ENCODE measurements at regions of chr1 and their contacts with region 1.

Region 1: GRCh38 chr1:201559679-201560162 is 20.8 kb downstream of the NAV1 start:
- DNase-seq: peak; percentile 92 to 96 (median 94)
- ATAC-seq: peak; percentile 95
- H3K4me3 ChIP-seq: no peak overlapping the region
- H3K27ac ChIP-seq: no peak overlapping the region
- H3K4me1 ChIP-seq: peaks cover 16 to 20% of the 10 kb centered on the region in 2 experiments
- H3K27me3 ChIP-seq: no peaks in the 10 kb centered on the region
- CTCF ChIP-seq: peak; percentile 99 to 100 (median 99)
- EP300 ChIP-seq: peak; percentile 53
- POLR2A ChIP-seq: no peak
- RAD21 ChIP-seq: peak; percentile 100

Region 2: DNA sequence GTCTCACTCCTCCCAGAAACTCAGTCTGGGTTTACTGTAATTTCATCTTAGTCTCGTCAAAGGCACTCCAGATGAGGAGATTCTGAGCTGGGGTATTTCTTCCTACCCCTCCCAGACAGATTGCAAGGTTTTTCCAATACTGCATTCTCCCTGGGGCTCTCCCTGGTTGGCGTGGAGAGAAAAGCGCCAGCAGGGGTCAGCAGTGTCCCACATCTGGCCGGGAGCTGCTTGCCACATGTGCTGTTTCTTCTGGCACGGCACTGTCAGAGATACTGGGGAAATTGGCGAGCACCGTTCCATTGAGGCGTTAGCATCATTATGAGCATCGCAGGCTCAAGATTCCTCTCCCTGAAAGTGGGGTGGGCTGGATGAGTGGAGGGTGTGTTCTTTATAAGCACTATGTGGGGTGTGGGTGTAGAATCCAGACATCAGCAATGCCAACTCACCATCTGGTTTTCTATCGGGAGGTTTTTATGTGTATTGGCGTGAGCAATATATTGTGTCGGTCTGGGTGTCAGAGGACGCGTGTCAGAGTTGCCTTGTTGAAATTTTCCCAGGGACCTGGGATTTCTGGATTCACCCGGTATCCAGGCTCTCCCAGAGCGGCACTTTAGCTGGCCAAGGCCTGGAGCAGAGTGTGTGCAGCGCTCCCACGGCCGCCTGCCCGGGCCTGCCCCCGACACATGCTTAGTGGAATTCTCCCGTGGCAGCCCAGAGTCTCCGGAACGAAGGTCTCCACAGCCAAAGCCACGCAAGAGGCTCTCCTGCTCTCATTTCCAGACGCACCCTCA is 28.8 kb before region 1 on chr1:
- CTCF ChIA-PET with region 1: interaction called, 6 read pairs
- POLR2A ChIA-PET with region 1: interaction called, 6 read pairs
- in situ Hi-C with region 1: no loop called
- intact Hi-C with region 1: loop called (anchors 1 kb)
- DNase-seq: peak; percentile 76 to 88 (median 82)
- ATAC-seq: peak; percentile 98
- H3K4me3 ChIP-seq: no peak overlapping the region
- H3K27ac ChIP-seq: no peak overlapping the region
- H3K4me1 ChIP-seq: peaks cover 6 to 14% of the 10 kb centered on the region in 2 experiments
- H3K27me3 ChIP-seq: peaks cover 0 to 13% of the 10 kb centered on the region in 2 experiments; a peak in 3 of 5 replicates
- CTCF ChIP-seq: peak; percentile 95 to 98 (median 98)
- EP300 ChIP-seq: peak; percentile 41
- POLR2A ChIP-seq: no peak
- RAD21 ChIP-seq: peak; percentile 97 to 98

Region 3: GRCh38 chr1:201703621-201704439 is 144.1 kb after region 1 on chr1:
- CTCF ChIA-PET with region 1: interaction called, 138 read pairs
- POLR2A ChIA-PET with region 1: interaction called, 9 read pairs
- in situ Hi-C with region 1: loop called (anchors 5 kb)
- intact Hi-C with region 1: loop called (anchors 1 kb)
- DNase-seq: peak; percentile 90 to 96 (median 94)
- ATAC-seq: peak; percentile 98
- H3K4me3 ChIP-seq: no peak overlapping the region
- H3K27ac ChIP-seq: no peak overlapping the region
- H3K4me1 ChIP-seq: peaks cover 11 to 15% of the 10 kb centered on the region in 2 experiments
- H3K27me3 ChIP-seq: peaks cover 0 to 4% of the 10 kb centered on the region in 2 experiments; a peak in 1 of 5 replicates
- CTCF ChIP-seq: peak; percentile 98 to 99 (median 99)
- EP300 ChIP-seq: peak; percentile 21; the same call in 1 of the 2 replicates
- POLR2A ChIP-seq: no peak
- RAD21 ChIP-seq: peak; percentile 100

Region 4: GRCh38 chr1:201783572-201783971 is 223.9 kb after region 1 on chr1:
- CTCF ChIA-PET with region 1: no interaction called
- POLR2A ChIA-PET with region 1: interaction called, 3 read pairs
- in situ Hi-C with region 1: loop called (anchors 5 kb)
- intact Hi-C with region 1: no loop called
- DNase-seq: peak in 3 of 4 experiments; percentile 23 to 35 (median 30)
- ATAC-seq: peak; percentile 79
- H3K4me3 ChIP-seq: no peak overlapping the region
- H3K27ac ChIP-seq: no peak overlapping the region
- H3K4me1 ChIP-seq: peaks cover 0 to under 1% of the 10 kb centered on the region in 2 experiments; a peak in 1 of 5 replicates
- H3K27me3 ChIP-seq: peaks cover 0 to 15% of the 10 kb centered on the region in 2 experiments; a peak in 2 of 5 replicates
- CTCF ChIP-seq: peak; percentile 25 to 51 (median 44); a peak in 4 of 6 replicates
- EP300 ChIP-seq: no peak
- POLR2A ChIP-seq: no peak
- RAD21 ChIP-seq: peak; percentile 16 to 33; a peak in 2 of 4 replicates

Region 5: DNA sequence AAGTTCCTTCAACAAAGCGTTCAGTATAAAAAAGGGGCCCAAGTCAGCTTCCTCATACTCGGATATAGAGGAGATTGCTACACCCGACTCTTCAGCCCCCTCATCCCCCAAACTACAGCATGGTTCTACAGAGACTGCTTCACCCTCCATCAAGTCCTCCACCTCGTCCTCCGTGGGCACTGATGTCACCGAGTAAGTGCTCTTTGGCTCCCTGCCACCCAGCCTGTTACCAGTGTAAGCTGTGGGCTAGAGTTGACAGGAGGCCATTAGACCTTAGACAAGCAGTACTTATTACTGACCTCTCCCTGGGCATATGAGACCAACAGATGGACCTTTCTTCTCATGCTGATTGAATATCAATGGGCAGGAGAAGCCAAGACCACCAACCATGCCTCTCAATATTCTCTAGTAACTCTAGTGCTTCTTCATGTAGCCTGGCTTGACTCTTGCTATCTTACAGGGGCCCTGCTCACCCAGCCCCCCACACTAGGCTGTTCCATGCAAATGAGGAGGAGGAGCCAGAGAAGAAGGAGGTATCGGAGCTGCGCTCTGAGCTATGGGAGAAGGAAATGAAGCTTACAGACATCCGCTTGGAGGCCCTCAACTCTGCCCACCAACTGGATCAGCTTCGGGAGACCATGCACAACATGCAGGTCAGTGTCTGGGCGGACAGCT is 248.4 kb after region 1 on chr1:
- CTCF ChIA-PET with region 1: no interaction called
- POLR2A ChIA-PET with region 1: interaction called, 3 read pairs
- in situ Hi-C with region 1: loop called (anchors 5 kb)
- intact Hi-C with region 1: no loop called
- DNase-seq: no peak
- ATAC-seq: peak; percentile 58; the same call in 1 of the 3 replicates
- H3K4me3 ChIP-seq: no peak overlapping the region
- H3K27ac ChIP-seq: no peak overlapping the region
- H3K4me1 ChIP-seq: peaks cover 0 to 3% of the 10 kb centered on the region in 2 experiments; a peak in 1 of 5 replicates
- H3K27me3 ChIP-seq: peaks cover 0 to 7% of the 10 kb centered on the region in 2 experiments; a peak in 1 of 5 replicates
- CTCF ChIP-seq: no peak
- EP300 ChIP-seq: no peak
- POLR2A ChIP-seq: no peak
- RAD21 ChIP-seq: no peak